Esophagus squamous epithelium (tissue), 5 donors: ENCODE measurements at regions of chr13 and their contacts with region 1.

Region 1: DNA sequence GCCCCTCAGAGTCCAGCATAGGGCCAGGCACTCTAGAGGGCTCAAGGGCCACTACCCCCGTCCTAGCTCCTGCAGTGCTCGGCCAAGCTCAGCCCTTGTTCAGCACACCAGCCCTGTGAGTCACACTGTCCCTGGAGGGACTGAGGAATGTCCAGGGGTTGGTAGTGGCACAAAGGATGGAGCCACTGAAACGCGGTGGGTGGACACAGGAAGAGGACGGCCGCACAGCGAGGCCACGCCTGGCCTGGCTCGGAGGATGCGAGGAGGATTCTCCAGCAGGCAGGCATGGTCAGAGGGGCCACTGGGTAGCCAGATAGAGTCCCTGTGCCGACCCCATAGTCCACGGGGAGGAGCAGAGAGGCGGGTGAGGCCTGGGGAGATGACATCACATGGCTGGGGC is 45.7 kb downstream of the C1QTNF9 start:
- DNase-seq: no peak
- H3K4me3 ChIP-seq: no peak overlapping the region
- H3K27ac ChIP-seq: no peak overlapping the region
- H3K4me1 ChIP-seq: no peaks in the 10 kb centered on the region
- H3K27me3 ChIP-seq: no peaks in the 10 kb centered on the region
- CTCF ChIP-seq: no peak
- POLR2A ChIP-seq: no peak

Region 2: GRCh38 chr13:22929381-22930126 is 1425.5 kb before region 1 on chr13:
- intact Hi-C with region 1: loop called (anchors 10 kb)
- DNase-seq: no peak
- H3K4me3 ChIP-seq: no peak overlapping the region
- H3K27ac ChIP-seq: no peak overlapping the region
- H3K4me1 ChIP-seq: peaks cover 0 to 20% (median 4%) of the 10 kb centered on the region in 3 donors
- H3K27me3 ChIP-seq: peaks cover 0 to 7% (median 0%) of the 10 kb centered on the region in 4 donors
- CTCF ChIP-seq: no peak
- POLR2A ChIP-seq: no peak